GM13976 (cell line): ENCODE measurements at regions of chr1 and their contacts with region 1.

Region 1: GRCh38 chr1:152459596-152460528 is 45.8 kb upstream of the CRNN start:
- DNase-seq: peak; percentile 82
- CTCF ChIP-seq: peak; percentile 75

Region 2: DNA sequence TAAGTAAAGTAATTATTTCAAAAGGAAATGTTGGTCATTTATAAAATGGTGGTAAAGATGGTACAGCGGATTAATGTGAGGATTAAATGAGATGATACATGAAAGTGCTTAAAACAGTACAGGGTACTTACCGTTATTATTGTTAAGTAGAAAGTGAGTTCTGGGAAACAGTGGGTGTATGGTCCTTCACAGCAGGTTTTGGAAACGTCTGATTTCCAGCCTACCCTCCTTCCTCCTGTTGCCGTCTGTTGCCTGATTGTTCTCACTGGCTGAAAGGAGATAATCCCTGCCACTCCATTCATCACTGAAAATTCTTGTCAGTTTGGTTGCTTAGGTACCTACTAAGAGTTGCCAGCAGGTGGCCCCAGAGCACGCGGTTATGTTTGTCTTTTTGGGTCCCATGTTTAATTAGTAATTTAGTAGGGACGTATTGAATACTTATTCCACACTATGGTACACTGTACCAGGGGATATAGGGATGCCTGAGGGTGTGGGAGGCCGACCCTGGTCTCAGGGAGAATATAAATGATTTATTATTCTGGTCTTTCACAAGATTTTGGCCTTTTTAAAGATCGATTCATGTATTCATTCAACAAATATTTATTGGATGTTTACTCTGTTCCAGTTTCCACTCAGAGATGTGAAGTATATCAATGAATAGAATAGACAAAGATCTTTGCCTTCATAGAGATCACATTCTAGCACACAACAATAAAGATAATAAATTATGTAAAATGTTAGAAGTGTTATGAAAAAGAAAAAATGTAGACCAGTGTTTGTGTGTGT is 270.0 kb before region 1 on chr1:
- in situ Hi-C with region 1: loop called (anchors 5 kb)
- DNase-seq: peak; percentile 71
- CTCF ChIP-seq: peak; percentile 69

Region 3: DNA sequence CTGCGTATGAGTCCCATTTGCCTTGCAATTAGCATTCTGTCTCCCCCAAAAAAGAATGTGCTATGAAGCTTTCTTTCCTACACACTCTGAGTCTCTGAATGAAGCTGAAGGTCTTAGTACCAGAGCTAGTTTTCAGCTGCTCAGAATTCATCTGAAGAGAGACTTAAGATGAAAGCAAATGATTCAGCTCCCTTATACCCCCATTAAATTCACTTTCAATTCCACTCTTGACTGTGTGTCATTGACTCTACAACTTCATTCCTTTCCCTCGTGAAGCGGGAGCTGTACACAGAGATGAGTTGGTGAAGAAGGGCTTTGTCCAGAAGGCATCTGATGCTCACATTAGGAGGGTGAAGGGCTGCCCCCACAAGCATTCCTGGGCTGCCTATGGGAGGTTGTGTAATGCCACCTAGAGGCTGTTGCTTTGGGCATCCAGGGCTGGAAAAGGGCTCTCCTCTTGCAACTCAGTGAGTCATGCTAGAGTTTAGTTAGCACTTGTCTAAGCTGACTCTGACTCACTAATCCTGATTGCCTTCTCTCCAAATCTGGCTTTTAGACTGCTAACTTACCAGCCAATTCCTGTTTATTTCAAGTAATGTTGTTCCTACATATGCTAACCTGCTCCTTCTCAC is 572.9 kb after region 1 on chr1:
- in situ Hi-C with region 1: no loop called
- DNase-seq: peak; percentile 21
- CTCF ChIP-seq: no peak